HEK293 (cell line): ENCODE measurements at regions of chr11 and their contacts with region 1.

Region 1: GRCh38 chr11:34997952-34998528 is 81.6 kb downstream of the PDHX start:
- H3K4me3 ChIP-seq: no peak overlapping the region
- H3K27ac ChIP-seq: no peak overlapping the region
- H3K4me1 ChIP-seq: no peaks in the 10 kb centered on the region
- CTCF ChIP-seq: no peak

Region 2: GRCh38 chr11:35237860-35238715 is 240.0 kb after region 1 on chr11:
- CTCF ChIA-PET with region 1: interaction called, 13 read pairs
- POLR2A ChIA-PET with region 1: no interaction called
- H3K4me3 ChIP-seq: no peak overlapping the region
- H3K27ac ChIP-seq: no peak overlapping the region
- H3K4me1 ChIP-seq: no peaks in the 10 kb centered on the region
- CTCF ChIP-seq: peak; percentile 58